ENCODE measurements at regions of chr10 and their contacts with region 1.

Region 1: DNA sequence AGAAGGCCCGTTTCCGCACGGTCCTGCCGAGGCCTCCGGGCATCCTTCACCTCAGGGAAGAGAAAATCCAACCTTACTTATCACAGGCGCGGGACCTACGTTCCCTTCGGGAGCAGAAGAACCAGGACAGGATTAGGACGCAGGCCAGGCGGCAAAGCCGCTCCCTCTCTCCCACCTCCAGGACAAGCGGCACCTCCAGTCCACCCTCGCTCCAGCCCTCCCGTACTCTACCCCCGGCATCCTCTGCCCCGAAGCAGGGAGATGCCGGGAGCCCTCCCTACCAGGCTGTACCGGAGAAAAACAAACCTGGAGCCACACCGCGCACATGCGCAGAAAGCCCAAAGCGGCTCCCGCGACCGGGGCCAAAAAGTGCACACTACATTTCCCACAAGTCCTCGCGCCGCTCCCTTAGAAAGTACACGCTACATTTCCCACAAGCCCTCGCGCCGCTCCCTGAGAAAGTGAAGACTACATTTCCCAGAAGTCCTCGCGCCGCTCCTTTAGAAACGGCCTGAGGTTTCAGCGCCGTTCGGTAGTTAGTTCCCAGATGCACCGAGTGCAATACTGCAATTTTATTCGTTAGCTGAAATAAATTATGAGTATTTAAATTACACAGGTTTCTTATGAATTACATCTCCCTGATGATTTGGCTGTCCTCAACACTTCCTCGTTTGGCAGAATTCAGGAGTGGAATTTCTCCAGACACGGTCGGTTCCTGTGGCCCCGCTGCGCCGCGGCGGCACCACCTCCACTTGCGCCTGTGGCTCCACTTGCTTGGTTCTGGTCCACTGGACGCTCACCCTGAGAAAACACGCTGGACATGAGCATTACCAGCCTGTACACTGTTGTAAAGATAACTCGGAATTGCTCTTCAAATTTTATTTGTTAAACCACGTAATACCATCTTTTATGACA is 85.6 kb downstream of the ZNF33B start:
- DNase-seq: peak; percentile 91 to 99 (median 96)

Region 2: DNA sequence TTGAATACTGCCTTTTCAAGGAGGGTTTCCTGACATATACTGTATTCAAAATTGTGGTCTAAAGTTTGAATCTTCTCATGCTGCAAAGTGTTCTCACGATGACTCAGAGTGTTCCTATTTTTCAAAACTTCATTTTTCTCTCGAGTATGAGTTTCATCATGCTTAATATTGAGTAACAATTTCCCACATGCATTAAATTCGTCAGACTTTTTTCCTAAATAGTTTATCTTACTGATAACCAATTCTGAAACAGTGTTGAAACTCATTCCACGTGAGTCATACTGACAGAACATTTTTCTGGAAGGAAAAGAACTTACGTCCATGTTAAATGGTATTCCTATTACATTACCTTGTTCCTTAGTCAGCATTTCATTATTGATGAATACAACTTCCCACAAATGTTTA is 41.5 kb after region 1 on chr10:
- intact Hi-C with region 1: no loop called
- DNase-seq: no peak

Region 3: GRCh38 chr10:42638055-42638820 is 85.5 kb after region 1 on chr10 and contains the start of gene ZNF33B:
- intact Hi-C with region 1: loop called (anchors 5 kb)
- DNase-seq: peak; percentile 80 to 96 (median 92)

Region 4: GRCh38 chr10:42782446-42783180 is 229.9 kb after region 1 on chr10 and contains the start of gene BMS1:
- intact Hi-C with region 1: loop called (anchors 5 kb)
- DNase-seq: peak; percentile 88 to 97 (median 93)